ENCODE measurements at regions of chr4 and their contacts with region 1.

Region 1: GRCh38 chr4:164779811-164780216 is 25.9 kb downstream of the SMIM31 start:
- DNase-seq: no peak
- ATAC-seq: no peak
- H3K4me3 ChIP-seq: no peak overlapping the region
- H3K27ac ChIP-seq: no peak overlapping the region
- H3K4me1 ChIP-seq: no peaks in the 10 kb centered on the region
- H3K27me3 ChIP-seq: no peaks in the 10 kb centered on the region
- CTCF ChIP-seq: peak in 3 of 5 experiments; percentile 10 to 25 (median 12)
- POLR2A ChIP-seq: no peak

Region 2: DNA sequence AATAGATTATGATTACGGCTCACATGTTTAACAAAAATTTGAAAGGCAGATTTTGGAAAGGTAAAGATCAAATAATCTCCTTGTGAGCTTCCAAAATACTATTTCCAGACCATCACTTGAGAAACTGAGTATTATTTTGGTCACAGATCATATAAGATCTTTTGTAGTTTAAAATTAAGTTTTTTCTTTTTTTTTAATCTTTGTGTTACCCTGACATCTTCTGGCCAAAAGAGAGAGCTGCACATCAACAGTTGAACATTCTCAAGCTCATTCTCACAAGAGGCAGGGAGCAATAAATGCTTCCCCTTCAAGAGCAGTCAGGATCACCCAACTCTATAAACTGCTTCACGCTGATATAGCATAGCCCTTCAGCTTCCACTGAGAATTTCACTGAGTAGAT is 317.0 kb after region 1 on chr4:
- in situ Hi-C with region 1: loop called in 1 of 4 experiments (anchors 25 kb)
- intact Hi-C with region 1: no loop called
- DNase-seq: no peak
- ATAC-seq: no peak
- H3K4me3 ChIP-seq: no peak overlapping the region
- H3K27ac ChIP-seq: no peak overlapping the region
- H3K4me1 ChIP-seq: no peaks in the 10 kb centered on the region
- H3K27me3 ChIP-seq: no peaks in the 10 kb centered on the region
- CTCF ChIP-seq: peak in 3 of 5 experiments; percentile 19 to 46 (median 25)
- POLR2A ChIP-seq: no peak

Region 3: GRCh38 chr4:165177725-165178666 is 398.2 kb after region 1 on chr4:
- in situ Hi-C with region 1: no loop called
- intact Hi-C with region 1: no loop called
- DNase-seq: no peak
- ATAC-seq: no peak
- H3K4me3 ChIP-seq: no peak overlapping the region
- H3K27ac ChIP-seq: no peak overlapping the region
- H3K4me1 ChIP-seq: no peaks in the 10 kb centered on the region
- H3K27me3 ChIP-seq: no peaks in the 10 kb centered on the region
- CTCF ChIP-seq: no peak
- POLR2A ChIP-seq: no peak

Measured in gastrocnemius medialis (tissue), 4 donors.